Naive thymus-derived CD4-positive, alpha-beta T cell (primary cell): ENCODE measurements at regions of chr4 and their contacts with region 1.

Region 1: GRCh38 chr4:167779864-167780263 is 312.5 kb upstream of the ANXA10 start:
- DNase-seq: no peak
- ATAC-seq: no peak
- H3K4me3 ChIP-seq: no peak overlapping the region
- H3K4me3 Mint-ChIP-seq: no peak overlapping the region
- H3K27ac ChIP-seq: no peak overlapping the region
- H3K27ac Mint-ChIP-seq: no peak overlapping the region
- H3K4me1 ChIP-seq: no peaks in the 10 kb centered on the region
- H3K4me1 Mint-ChIP-seq: no peaks in the 10 kb centered on the region
- H3K27me3 ChIP-seq: no peaks in the 10 kb centered on the region
- H3K27me3 Mint-ChIP-seq: no peaks in the 10 kb centered on the region

Region 2: DNA sequence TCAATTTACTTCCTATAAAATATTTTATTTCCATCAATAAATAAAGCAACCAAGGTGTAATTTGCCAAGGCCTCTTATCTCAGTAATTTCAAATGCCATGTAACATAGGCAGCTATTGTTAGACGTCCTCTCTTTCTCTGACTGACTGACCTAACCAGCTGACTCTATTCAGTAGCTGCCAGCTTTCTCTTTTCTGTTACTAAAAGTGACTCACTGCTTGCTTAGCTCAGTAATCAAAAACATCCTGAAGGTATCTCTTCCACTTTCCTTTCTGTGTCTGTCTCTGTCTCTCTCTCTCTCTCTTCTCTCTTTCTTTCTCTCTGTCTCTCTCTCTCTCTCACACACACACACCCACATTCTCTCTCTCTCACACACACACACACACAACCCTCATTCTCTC is 679.7 kb before region 1 on chr4:
- CTCF ChIA-PET with region 1: no interaction called
- POLR2A ChIA-PET with region 1: no interaction called
- intact Hi-C with region 1: loop called in 1 of 2 experiments (anchors 10 kb)
- DNase-seq: no peak
- ATAC-seq: no peak
- H3K4me3 ChIP-seq: no peak overlapping the region
- H3K4me3 Mint-ChIP-seq: no peak overlapping the region
- H3K27ac ChIP-seq: no peak overlapping the region
- H3K27ac Mint-ChIP-seq: no peak overlapping the region
- H3K4me1 ChIP-seq: no peaks in the 10 kb centered on the region
- H3K4me1 Mint-ChIP-seq: no peaks in the 10 kb centered on the region
- H3K27me3 ChIP-seq: no peaks in the 10 kb centered on the region
- H3K27me3 Mint-ChIP-seq: no peaks in the 10 kb centered on the region